ENCODE measurements at regions of chr14 and their contacts with region 1.

Region 1: DNA sequence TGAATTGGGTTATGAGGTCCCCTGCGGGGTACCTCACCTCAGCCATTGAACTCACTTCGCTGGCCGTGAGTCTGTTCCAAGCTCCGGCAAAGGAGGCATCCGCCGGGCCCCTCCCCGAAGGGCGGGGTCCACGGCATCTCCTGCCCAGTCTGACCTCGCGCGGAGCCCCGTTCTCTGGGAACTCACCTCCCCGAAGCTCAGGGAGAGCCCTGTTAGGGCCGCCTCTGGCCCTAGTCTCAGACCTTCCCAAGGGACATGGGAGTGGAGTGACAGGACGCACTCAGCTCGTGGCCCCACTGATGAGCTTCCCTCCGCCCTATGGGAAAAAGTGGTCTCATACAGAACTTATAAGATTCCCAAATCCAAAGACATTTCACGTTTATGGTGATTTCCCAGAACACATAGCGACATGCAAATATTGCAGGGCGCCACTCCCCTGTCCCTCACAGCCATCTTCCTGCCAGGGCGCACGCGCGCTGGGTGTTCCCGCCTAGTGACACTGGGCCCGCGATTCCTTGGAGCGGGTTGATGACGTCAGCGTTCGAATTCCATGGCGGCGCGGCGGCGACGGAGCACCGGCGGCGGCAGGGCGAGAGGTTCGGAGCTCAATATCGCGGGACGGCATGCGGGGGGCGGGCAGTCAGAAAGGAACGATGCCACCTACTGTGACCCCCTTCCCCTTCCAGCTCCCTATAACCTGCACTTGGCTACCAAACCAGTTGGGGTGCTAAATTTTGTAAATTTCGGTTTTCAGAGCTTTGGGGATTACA is at the start of gene PARP2:
- DNase-seq: peak; percentile 93
- H3K4me3 Mint-ChIP-seq: peak within 1 kb of the TSS; percentile 92
- H3K27ac Mint-ChIP-seq: peak within 1 kb of the TSS; percentile 99
- H3K4me1 Mint-ChIP-seq: peaks cover 26% of the 10 kb centered on the region
- H3K27me3 Mint-ChIP-seq: peaks cover 2% of the 10 kb centered on the region
- total RNA-seq, gene PARP2: 28.6 to 32.5 TPM

Region 2: DNA sequence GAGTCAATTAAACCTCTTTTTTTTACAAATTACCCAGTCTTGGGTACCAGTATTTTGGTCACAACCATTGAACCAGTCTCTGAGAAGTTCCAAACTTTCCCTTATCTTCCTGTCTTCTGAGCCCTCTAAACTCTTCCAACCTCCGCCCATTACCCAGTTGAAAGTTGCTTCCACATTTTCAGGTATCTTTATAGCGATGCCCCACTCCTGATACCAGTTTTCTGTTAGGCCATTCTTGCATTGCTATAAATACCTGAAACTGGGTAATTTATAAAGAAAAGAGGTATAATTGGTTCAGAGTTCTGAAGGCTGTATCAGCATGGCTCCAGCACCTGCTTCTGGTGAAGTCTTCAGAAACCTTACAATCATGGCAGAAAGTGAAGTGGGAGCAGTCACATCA is 69.2 kb before region 1 on chr14:
- CTCF ChIA-PET with region 1: no interaction called
- POLR2A ChIA-PET with region 1: no interaction called
- DNase-seq: no peak
- H3K4me3 Mint-ChIP-seq: no peak overlapping the region
- H3K27ac Mint-ChIP-seq: no peak overlapping the region
- H3K4me1 Mint-ChIP-seq: peaks cover 6% of the 10 kb centered on the region
- H3K27me3 Mint-ChIP-seq: no peaks in the 10 kb centered on the region

Region 3: GRCh38 chr14:20327005-20327869 is 16.0 kb before region 1 on chr14:
- CTCF ChIA-PET with region 1: interaction called, 31 read pairs
- POLR2A ChIA-PET with region 1: interaction called, 20 read pairs
- DNase-seq: peak; percentile 67
- H3K4me3 Mint-ChIP-seq: no peak overlapping the region
- H3K27ac Mint-ChIP-seq: peak overlapping the region; percentile 1
- H3K4me1 Mint-ChIP-seq: peaks cover 45% of the 10 kb centered on the region
- H3K27me3 Mint-ChIP-seq: no peaks in the 10 kb centered on the region

Region 4: DNA sequence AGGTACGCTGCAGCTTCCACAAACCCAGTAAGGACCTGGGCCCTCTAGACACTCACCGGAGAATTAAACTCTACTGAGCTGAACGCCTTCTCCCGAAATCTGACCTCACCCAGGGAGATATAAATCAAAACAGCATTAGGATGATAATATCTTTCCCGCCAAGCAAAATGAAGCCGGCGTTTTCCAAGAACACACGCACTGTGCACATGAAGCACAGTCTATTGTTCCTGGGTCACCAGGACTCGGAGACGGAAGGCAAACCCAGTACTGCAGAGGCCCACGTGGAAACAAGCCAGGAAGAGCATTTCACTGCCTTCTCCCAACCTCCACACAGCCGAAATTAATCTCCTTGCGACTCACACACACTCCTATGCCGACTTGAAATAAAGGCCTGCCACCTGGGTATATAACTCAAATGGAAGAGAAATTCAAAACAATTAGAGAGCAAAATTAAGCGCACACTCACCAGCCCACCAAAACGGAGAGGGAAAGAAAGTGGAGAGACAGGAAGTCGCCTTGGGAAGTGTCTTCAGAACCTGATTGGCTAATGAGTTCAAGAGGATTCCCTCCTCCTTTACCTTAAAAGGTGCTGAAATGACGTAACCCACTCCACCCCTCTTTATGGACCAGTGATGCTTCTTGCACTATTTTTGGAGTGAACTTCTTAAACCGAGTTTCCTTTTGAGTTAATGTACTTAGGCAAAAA is 10.3 kb before region 1 on chr14 and contains the start of gene CCNB1IP1:
- CTCF ChIA-PET with region 1: interaction called, 31 read pairs
- POLR2A ChIA-PET with region 1: interaction called, 20 read pairs
- DNase-seq: peak; percentile 75
- H3K4me3 Mint-ChIP-seq: peak within 1 kb of the TSS; percentile 98
- H3K27ac Mint-ChIP-seq: peak within 1 kb of the TSS; percentile 94
- H3K4me1 Mint-ChIP-seq: peaks cover 53% of the 10 kb centered on the region
- H3K27me3 Mint-ChIP-seq: peaks cover 4% of the 10 kb centered on the region
- total RNA-seq, gene CCNB1IP1: 30.8 to 32.1 TPM

Region 5: DNA sequence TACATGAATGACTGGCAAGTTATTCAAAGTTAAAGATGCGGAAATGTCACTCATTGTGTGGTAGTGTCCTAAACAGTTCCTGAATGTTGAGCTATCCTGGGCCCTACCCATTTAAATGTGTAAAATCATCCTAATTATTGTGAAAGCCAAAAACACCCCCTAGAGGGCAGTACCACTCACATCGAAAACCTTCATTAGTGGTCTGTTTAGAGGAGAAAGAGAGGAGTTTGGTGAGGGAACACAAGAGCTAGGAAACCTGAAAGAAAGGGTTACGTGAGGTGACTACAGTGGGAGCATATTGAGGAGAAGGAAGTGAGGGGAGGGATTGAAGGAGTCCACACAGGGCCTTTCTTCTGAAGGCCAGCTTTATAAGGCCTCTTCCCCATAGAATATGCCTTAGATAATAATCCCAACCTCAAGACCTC is 72.5 kb after region 1 on chr14:
- CTCF ChIA-PET with region 1: interaction called, 10 read pairs
- POLR2A ChIA-PET with region 1: interaction called, 9 read pairs
- DNase-seq: peak; percentile 60
- H3K4me3 Mint-ChIP-seq: no peak overlapping the region
- H3K27ac Mint-ChIP-seq: peak overlapping the region; percentile 54
- H3K4me1 Mint-ChIP-seq: peaks cover 36% of the 10 kb centered on the region
- H3K27me3 Mint-ChIP-seq: no peaks in the 10 kb centered on the region

Region 6: DNA sequence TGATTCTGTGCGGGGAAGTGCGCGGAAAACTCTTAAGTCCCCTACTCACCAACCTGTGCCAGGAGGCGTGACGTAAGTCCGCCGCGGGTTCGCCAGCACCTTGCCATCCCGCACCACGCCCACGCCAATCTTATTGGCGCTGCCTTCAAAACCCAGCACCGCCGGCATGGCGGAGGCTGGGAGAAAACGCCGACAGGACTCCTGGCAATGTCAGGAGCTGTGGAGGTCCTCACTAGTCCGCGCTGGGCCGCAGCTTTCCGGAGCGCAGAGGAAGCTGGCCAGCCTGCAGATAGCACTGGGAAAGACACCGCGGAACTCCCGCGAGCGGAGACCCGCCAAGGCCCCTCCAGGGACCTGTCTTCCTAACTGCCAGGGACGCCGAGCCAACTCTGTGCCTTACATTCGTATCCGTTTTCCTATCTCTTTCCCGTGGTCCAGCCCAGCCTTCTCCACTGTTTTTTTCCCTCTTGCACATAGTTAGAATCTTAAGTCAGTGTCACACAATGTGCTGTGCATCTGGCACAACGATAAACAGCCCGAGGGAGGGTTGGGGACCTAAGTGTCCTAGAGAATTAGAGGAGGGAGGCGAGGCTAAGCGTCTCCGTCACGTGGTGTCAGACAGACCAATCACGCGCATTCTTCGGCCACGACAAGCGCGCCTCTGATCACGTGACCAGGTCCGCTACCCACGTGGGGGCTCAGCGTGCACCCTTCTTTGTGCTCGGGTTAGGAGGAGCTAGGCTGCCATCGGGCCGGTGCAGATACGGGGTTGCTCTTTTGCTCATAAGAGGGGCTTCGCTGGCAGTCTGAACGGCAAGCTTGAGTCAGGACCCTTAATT is 111.5 kb after region 1 on chr14 and contains the starts of genes APEX1 and OSGEP:
- CTCF ChIA-PET with region 1: interaction called, 4 read pairs
- POLR2A ChIA-PET with region 1: interaction called, 10 read pairs
- DNase-seq: peak; percentile 99
- H3K4me3 Mint-ChIP-seq: peak within 1 kb of the TSS; percentile 3
- H3K27ac Mint-ChIP-seq: no peak within 1 kb of the TSS
- H3K4me1 Mint-ChIP-seq: peaks cover 24% of the 10 kb centered on the region
- H3K27me3 Mint-ChIP-seq: no peaks in the 10 kb centered on the region
- total RNA-seq, gene APEX1: 131 to 144 TPM
- total RNA-seq, gene OSGEP: 58.5 to 59.8 TPM

Region 7: GRCh38 chr14:20539906-20540305 is 196.6 kb after region 1 on chr14:
- CTCF ChIA-PET with region 1: no interaction called
- POLR2A ChIA-PET with region 1: no interaction called
- DNase-seq: no peak
- H3K4me3 Mint-ChIP-seq: no peak overlapping the region
- H3K27ac Mint-ChIP-seq: no peak overlapping the region
- H3K4me1 Mint-ChIP-seq: no peaks in the 10 kb centered on the region
- H3K27me3 Mint-ChIP-seq: peaks cover 6% of the 10 kb centered on the region

Measured in activated CD4-positive, alpha-beta T cell treated with anti-CD3 and anti-CD28 coated beads, Interleukin-2, amount 10 ng/mL, durations not matched to agents 7 days and 5 days (primary cell).